ENCODE measurements at regions of chr18 and their contacts with region 1.

Region 1: DNA sequence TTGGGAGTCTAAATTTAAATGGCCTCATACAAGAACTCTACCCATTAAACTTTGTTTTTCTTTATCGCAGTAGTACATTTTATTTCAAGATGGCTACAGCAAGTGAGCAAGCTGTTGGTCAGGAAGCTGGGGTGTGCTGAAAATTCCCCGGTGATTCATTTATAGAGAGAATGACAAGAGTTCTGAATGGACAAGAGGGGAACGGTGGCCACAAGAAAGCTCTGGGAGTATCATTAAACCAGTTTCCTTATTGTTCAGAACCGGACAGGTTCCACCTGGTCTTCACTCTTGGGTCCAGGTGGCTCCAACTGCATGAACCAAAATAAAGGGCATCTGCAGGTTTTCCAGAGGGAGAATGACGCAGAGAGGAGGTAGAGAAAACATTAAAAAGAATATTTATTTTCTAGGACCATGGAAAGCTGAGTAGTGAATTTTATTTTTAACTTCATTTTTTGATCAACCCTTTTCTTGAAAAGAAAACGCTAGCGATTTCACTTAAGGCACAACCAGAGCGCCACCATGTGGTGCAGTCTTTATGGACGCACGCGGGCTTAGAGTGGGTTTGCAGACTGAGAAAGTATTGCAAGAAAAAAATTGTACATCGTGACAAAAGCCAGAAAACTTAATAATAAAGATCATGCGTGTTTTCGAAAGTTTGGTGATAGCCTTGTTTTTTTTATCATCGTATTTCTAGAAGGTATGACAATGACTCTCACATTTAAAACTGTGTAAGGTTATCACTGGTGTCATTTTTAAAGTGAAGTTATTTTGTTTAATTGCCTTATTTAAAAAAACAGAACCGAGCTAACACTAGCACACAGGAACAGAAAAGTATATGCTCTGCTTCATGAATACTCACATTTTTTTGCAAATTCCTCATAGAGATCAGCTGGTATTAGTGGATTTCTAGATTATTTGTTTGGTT is 97.9 kb upstream of the NOL4 start:
- DNase-seq: peak; percentile 36
- ATAC-seq: no peak

Region 2: DNA sequence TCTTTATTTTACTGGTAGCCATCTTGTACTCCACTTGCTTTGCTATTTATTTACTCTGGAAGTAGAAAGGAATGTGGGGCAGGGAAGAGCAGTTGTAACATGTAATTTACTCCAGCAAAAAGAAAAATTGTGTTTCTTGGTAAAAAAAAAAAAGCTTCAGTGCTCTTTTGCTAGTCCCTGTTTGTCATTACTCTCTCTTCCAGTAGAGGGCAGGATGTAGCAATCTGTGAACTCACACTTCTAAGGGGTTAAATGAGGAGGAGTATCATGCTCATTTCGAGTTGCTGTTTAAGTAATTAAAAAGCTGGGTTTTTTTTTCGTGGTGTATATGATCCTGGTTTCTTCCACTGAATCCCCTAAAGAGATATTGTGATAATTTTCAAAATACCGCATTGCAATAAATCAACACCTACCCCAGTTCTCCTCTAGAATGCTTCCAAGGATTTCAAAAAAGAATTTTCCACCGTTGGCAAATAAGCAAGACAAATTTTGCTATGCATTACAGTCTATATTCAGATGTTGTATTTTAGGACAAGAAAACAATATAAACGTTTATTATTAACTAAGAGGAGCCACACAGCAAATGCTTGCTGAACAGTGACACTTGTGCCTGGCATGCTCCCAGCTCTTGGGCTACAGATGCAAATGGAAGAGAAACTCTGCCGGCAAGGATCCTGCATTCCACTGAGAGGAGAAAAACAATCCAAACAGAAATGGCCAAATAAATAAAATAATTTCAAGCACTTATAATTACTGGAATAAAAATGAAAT is 483.0 kb before region 1 on chr18:
- intact Hi-C with region 1: loop called in 1 of 2 experiments (anchors 10 kb)
- DNase-seq: peak; percentile 27
- ATAC-seq: no peak

Region 3: DNA sequence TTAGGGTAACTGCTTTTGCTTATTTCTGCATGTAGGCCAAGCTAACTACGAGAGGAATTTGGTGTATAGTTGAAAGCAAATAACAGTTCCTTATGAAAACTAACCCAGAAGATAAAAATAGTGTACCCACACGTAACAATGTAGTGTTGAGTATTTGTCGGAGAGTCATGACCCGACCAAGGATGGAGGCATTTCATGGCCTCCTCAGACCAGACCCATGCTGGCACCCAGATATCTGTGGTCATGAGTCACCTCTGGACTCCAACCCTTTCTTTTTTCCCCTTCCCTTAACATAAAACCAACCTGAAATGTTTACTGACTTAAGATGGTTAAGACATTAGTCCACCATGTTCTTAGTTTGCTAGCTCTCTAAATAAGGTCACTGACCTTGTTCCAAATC is 416.6 kb before region 1 on chr18:
- intact Hi-C with region 1: no loop called
- DNase-seq: no peak
- ATAC-seq: no peak

Region 4: GRCh38 chr18:34122724-34123334 is 199.8 kb before region 1 on chr18:
- intact Hi-C with region 1: loop called in 1 of 2 experiments (anchors 2 kb)
- DNase-seq: no peak
- ATAC-seq: peak in 1 of 2 donors; percentile 40

Region 5: GRCh38 chr18:34207344-34207851 is 115.2 kb before region 1 on chr18:
- intact Hi-C with region 1: no loop called
- DNase-seq: no peak
- ATAC-seq: no peak

Region 6: DNA sequence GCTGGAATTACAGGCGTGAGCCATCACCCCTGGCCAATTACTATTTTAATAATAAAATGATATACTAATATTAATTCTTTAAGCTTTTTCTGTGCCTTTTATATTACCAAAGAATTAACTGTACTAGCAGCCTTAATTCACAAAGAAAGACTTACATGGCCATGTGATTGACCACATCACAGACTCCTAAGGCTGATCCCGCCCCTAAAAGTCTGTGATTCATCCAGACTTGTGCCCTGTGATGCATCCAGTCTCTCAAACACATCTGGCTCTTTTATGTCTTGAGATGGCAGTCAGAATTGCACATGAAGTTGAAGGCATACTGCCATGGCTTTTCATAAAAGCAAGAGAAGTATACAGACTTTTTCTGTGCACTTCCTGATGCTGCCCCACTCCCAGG is 479.1 kb after region 1 on chr18:
- intact Hi-C with region 1: no loop called
- DNase-seq: no peak
- ATAC-seq: no peak